Naive thymus-derived CD4-positive, alpha-beta T cell (primary cell): ENCODE measurements at regions of chr2 and their contacts with region 1.

Region 1: GRCh38 chr2:74498500-74499266 is 720 bp downstream of the LBX2 start:
- DNase-seq: peak in 2 of 9 donors; percentile 29 to 37
- ATAC-seq: peak; percentile 52
- H3K4me3 ChIP-seq: peak overlapping the region; percentile 61
- H3K4me3 Mint-ChIP-seq: peak overlapping the region; percentile 63 to 97 (median 86)
- H3K27ac ChIP-seq: no peak overlapping the region
- H3K27ac Mint-ChIP-seq: peak overlapping the region in 4 of 9 donors; percentile 3 to 85 (median 33)
- H3K4me1 ChIP-seq: peaks cover 13 to 35% of the 10 kb centered on the region in 2 donors
- H3K4me1 Mint-ChIP-seq: peaks cover 20 to 45% (median 37%) of the 10 kb centered on the region in 7 donors
- H3K27me3 ChIP-seq: peaks cover 4 to 33% of the 10 kb centered on the region in 2 donors
- H3K27me3 Mint-ChIP-seq: peaks cover 39 to 58% (median 47%) of the 10 kb centered on the region in 5 donors

Region 2: DNA sequence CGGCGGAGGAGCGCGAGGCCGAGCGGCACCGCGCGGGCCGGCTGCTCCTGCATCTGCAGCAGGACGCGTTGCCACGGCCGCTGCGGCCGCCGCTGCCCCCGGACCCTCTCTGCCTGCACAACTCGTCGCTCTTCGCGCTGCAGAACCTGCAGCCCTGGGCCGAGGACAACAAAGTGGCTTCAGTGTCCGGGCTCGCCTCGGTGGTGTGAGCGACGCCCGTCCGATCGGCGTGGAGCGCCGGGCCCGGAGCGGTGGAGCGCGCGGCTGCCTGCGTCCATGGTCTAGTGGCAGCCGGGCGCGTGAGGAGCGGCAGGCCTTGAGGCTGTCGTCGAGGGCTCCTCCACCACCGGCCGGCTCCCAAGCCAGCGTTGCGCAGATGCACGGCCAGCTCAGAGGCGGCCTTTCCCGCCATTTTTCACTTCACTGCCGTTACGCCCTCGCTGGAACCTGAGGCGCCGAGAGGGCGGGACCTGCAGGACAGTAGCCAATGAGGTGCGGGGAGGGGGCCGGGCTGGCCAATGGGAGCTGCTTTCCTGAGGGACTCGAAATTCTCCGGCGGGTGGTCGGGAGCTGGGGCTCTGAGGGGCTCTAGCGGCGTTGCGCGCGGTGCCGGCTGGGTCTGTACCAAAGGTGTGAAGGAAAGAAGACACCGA is 17.4 kb after region 1 on chr2:
- CTCF ChIA-PET with region 1: no interaction called
- POLR2A ChIA-PET with region 1: interaction called, 3 read pairs
- intact Hi-C with region 1: loop called in 1 of 2 experiments (anchors 2 kb)
- DNase-seq: peak; percentile 55 to 80 (median 71)
- ATAC-seq: peak; percentile 85
- H3K4me3 ChIP-seq: peak overlapping the region; percentile 28
- H3K4me3 Mint-ChIP-seq: peak overlapping the region; percentile 66 to 87 (median 80)
- H3K27ac ChIP-seq: no peak overlapping the region
- H3K27ac Mint-ChIP-seq: peak overlapping the region in 1 of 9 donors; percentile 72
- H3K4me1 ChIP-seq: peaks cover 10 to 32% of the 10 kb centered on the region in 2 donors
- H3K4me1 Mint-ChIP-seq: peaks cover 9 to 25% (median 20%) of the 10 kb centered on the region in 7 donors
- H3K27me3 ChIP-seq: peaks cover 12 to 42% of the 10 kb centered on the region in 2 donors
- H3K27me3 Mint-ChIP-seq: peaks cover 69 to 83% (median 79%) of the 10 kb centered on the region in 5 donors

Region 3: GRCh38 chr2:74735544-74735943 is 236.9 kb after region 1 on chr2:
- CTCF ChIA-PET with region 1: no interaction called
- POLR2A ChIA-PET with region 1: no interaction called
- intact Hi-C with region 1: no loop called
- DNase-seq: no peak
- ATAC-seq: no peak
- H3K4me3 ChIP-seq: no peak overlapping the region
- H3K4me3 Mint-ChIP-seq: no peak overlapping the region
- H3K27ac ChIP-seq: no peak overlapping the region
- H3K27ac Mint-ChIP-seq: no peak overlapping the region
- H3K4me1 ChIP-seq: no peaks in the 10 kb centered on the region
- H3K4me1 Mint-ChIP-seq: peaks cover 0 to 9% (median 5%) of the 10 kb centered on the region in 7 donors
- H3K27me3 ChIP-seq: no peaks in the 10 kb centered on the region
- H3K27me3 Mint-ChIP-seq: peaks cover 4 to 19% (median 10%) of the 10 kb centered on the region in 5 donors